ENCODE measurements at regions of chr9 and their contacts with region 1.

Region 1: DNA sequence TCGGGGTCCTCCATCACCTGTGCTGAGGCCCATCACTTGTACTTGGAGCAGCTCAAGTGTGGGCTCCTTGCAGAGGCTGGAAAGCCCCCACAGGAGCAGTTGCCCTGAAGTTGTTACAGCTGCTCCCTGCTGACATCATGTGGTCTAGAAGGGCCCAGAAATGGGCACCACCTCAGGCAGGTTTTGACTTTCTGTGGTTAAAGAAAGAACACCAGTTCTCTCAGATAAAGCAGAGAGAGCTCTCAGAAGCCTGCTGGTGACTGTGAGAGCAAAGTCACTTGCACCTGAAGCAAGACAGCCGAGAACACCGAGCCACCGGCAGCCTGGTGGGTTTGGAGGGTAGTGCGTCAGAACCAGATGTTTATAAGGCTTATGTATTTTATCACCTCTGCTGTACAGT is 70.4 kb downstream of the MVB12B start:
- DNase-seq: peak; percentile 70
- ATAC-seq: peak; percentile 96
- H3K4me3 Mint-ChIP-seq: peak overlapping the region; percentile 78
- H3K27ac Mint-ChIP-seq: peak overlapping the region; percentile 86
- H3K4me1 Mint-ChIP-seq: peaks cover 56% of the 10 kb centered on the region
- H3K27me3 Mint-ChIP-seq: no peaks in the 10 kb centered on the region

Region 2: GRCh38 chr9:126326228-126327005 is 70.6 kb before region 1 on chr9 and contains the start of gene MVB12B:
- POLR2A ChIA-PET with region 1: interaction called, 18 read pairs
- DNase-seq: peak; percentile 80
- ATAC-seq: peak; percentile 20
- H3K4me3 Mint-ChIP-seq: peak within 1 kb of the TSS; percentile 86
- H3K27ac Mint-ChIP-seq: peak within 1 kb of the TSS; percentile 95
- H3K4me1 Mint-ChIP-seq: peaks cover 44% of the 10 kb centered on the region
- H3K27me3 Mint-ChIP-seq: no peaks in the 10 kb centered on the region
- total RNA-seq, gene MVB12B: 33.5 to 34.1 TPM

Region 3: GRCh38 chr9:126411225-126411947 is 14.3 kb after region 1 on chr9:
- POLR2A ChIA-PET with region 1: no interaction called
- DNase-seq: no peak
- ATAC-seq: peak; percentile 87
- H3K4me3 Mint-ChIP-seq: peak overlapping the region; percentile 76
- H3K27ac Mint-ChIP-seq: peak overlapping the region; percentile 94
- H3K4me1 Mint-ChIP-seq: peaks cover 47% of the 10 kb centered on the region
- H3K27me3 Mint-ChIP-seq: no peaks in the 10 kb centered on the region

Region 4: DNA sequence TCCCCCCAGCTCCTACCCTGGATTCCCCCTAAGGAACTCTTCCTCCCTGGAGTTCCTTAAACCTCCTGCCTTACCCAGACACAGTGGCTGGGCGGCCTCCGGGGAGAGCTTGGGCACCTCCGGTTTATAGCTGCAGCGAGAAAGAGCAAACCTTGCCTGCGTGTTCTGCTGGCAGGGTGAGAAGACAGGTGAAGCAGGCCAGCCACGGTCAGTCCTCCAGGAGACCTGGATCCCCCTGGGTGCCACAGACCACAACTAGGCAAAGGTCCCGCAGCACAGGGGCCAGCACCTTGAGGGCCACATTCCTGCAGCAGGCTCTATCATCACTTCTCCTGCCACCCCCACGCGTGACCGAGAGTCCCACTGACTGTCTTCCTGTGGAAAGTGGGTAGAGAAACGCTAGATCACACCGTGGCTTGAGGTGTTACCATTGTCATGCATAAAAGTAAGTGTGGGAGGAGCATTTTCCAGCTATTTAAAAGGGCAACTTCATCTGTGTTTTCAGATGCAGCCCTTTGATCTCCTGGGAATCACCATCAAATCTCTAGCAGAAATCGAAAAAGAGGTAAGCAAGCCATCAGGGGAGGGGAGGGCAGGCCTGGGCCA is 86.5 kb after region 1 on chr9:
- POLR2A ChIA-PET with region 1: no interaction called
- DNase-seq: no peak
- ATAC-seq: no peak
- H3K4me3 Mint-ChIP-seq: peak overlapping the region; percentile 2
- H3K27ac Mint-ChIP-seq: peak overlapping the region; percentile 68
- H3K4me1 Mint-ChIP-seq: peaks cover 14% of the 10 kb centered on the region
- H3K27me3 Mint-ChIP-seq: no peaks in the 10 kb centered on the region

Measured in activated naive CD8-positive, alpha-beta T cell treated with anti-CD3 and anti-CD28 coated beads, Interleukin-2, amount 10 ng/mL, durations not matched to agents 7 days and 5 days (primary cell).